BJ (cell line): ENCODE measurements at regions of chr15 and their contacts with region 1.

Region 1: DNA sequence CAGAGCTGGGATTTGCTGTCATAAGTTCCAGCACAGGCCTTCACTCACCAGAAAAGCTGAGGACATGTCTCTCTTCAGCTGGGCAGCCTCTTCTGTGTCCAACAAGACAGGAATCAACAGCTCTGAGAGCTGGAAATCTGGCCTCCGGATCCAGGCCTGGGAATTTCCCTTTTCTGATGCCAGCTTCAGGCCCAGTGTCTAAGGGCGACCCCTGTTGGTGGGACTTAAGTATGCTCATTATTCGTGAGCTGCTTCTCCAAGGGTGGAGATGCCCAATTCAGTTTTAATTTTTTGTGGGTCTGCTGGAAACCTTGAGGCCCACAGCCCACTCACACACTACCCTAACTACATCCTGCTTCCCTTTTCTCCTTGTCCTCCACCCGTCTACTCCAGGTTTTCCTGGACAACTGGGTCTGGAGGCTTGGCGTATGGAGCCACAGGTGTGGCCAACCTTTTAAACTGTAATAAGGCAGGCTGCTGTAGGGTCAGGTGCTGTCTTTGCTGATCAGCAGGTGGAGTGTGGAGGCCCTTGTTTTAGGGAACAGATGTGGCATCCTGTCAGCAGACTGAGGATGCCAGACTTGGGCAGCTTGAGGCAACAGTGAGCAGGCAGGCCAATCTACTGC is 2.6 kb upstream of the CEMIP start:
- DNase-seq: no peak
- H3K4me3 ChIP-seq: no peak overlapping the region
- H3K27me3 ChIP-seq: no peaks in the 10 kb centered on the region
- CTCF ChIP-seq: peak; percentile 85

Region 2: GRCh38 chr15:80489030-80489594 is 287.4 kb before region 1 on chr15:
- CTCF ChIA-PET with region 1: interaction called, 7 read pairs
- POLR2A ChIA-PET with region 1: interaction called, 11 read pairs
- DNase-seq: peak; percentile 97
- H3K4me3 ChIP-seq: no peak overlapping the region
- H3K27me3 ChIP-seq: no peaks in the 10 kb centered on the region
- CTCF ChIP-seq: no peak

Region 3: GRCh38 chr15:80567721-80568157 is 208.8 kb before region 1 on chr15:
- CTCF ChIA-PET with region 1: interaction called, 191 read pairs
- POLR2A ChIA-PET with region 1: interaction called, 12 read pairs
- DNase-seq: peak; percentile 73
- H3K4me3 ChIP-seq: no peak overlapping the region
- H3K27me3 ChIP-seq: no peaks in the 10 kb centered on the region
- CTCF ChIP-seq: peak; percentile 94

Region 4: GRCh38 chr15:80660122-80660521 is 116.4 kb before region 1 on chr15:
- CTCF ChIA-PET with region 1: interaction called, 12 read pairs
- POLR2A ChIA-PET with region 1: no interaction called
- DNase-seq: no peak
- H3K4me3 ChIP-seq: no peak overlapping the region
- H3K27me3 ChIP-seq: no peaks in the 10 kb centered on the region
- CTCF ChIP-seq: peak; percentile 53

Region 5: DNA sequence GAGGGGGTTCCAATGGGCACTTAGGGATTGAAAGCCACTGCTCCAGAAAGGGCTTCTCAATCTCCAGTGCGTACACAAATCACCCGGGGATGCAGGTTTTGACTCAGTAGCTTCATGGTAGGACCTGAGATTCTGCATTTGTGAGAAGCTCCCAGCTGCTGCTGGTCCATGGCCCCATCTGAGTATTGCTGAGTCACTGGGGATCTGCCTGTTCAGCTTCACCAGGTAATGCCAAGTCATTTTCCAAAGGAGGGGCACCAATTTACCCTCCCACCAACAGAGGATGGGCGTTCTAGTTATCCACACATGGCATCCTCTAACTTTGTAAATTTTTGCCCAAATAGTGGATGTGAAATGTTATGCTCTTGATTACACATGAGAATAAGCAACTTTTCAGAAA is 10.3 kb before region 1 on chr15:
- CTCF ChIA-PET with region 1: interaction called, 24 read pairs
- POLR2A ChIA-PET with region 1: no interaction called
- DNase-seq: no peak
- H3K4me3 ChIP-seq: no peak overlapping the region
- H3K27me3 ChIP-seq: no peaks in the 10 kb centered on the region
- CTCF ChIP-seq: no peak